Activated CD4-positive, alpha-beta T cell treated with anti-CD3 and anti-CD28 coated beads for 36 hours (primary cell): ENCODE measurements at regions of chr9 and their contacts with region 1.

Region 1: GRCh38 chr9:21443849-21444625 is 3.8 kb downstream of the IFNA1 start:
- DNase-seq: no peak
- ATAC-seq: peak; percentile 66
- H3K4me3 Mint-ChIP-seq: peak overlapping the region; percentile 31
- H3K27ac Mint-ChIP-seq: peak overlapping the region; percentile 1
- H3K4me1 Mint-ChIP-seq: peaks cover 12% of the 10 kb centered on the region
- H3K27me3 Mint-ChIP-seq: peaks cover 3% of the 10 kb centered on the region

Region 2: DNA sequence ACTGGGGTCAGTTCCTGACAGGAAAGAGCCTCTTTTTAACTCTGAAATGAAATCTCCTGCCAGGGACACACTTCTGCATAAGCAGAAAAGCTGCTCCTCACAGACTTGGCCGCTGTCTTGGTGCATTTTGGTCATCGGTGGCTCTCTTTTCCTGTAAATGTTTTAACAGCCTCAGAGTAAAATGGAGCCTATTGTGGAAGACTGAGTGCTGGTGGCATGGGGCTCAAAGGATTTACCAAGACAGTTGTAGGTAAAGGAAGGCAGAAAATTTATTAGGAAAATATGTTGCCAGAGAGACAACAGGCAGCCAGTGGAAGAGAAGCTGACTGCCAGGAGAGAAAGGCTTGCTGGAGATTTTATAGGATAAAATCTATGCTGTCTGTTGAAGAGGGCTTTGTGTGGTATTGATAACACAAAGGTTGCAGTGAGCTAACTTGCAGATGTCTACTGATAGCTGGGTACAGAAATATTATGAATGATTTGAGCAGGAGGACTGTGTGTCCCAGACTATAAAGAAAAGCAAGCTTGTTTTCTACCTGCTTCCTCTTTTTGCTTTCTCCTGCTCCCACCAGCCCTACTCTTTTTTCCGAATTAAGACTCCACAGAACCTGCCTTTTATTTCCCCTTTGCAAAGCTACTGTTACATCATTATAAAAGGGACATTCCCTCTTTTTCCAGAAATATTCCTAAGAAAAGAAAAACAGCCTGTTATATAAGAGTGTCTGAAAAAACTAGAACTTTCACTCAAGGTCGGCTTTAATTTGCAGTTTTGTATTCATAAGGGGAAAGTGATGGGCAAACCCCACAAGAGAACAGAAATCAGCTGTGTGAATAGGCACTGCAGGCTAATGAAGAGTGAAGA is 176.3 kb before region 1 on chr9:
- CTCF ChIA-PET with region 1: no interaction called
- POLR2A ChIA-PET with region 1: interaction called, 12 read pairs
- intact Hi-C with region 1: no loop called
- DNase-seq: no peak
- ATAC-seq: no peak
- H3K4me3 Mint-ChIP-seq: no peak overlapping the region
- H3K27ac Mint-ChIP-seq: no peak overlapping the region
- H3K4me1 Mint-ChIP-seq: no peaks in the 10 kb centered on the region
- H3K27me3 Mint-ChIP-seq: peaks cover 5% of the 10 kb centered on the region

Region 3: DNA sequence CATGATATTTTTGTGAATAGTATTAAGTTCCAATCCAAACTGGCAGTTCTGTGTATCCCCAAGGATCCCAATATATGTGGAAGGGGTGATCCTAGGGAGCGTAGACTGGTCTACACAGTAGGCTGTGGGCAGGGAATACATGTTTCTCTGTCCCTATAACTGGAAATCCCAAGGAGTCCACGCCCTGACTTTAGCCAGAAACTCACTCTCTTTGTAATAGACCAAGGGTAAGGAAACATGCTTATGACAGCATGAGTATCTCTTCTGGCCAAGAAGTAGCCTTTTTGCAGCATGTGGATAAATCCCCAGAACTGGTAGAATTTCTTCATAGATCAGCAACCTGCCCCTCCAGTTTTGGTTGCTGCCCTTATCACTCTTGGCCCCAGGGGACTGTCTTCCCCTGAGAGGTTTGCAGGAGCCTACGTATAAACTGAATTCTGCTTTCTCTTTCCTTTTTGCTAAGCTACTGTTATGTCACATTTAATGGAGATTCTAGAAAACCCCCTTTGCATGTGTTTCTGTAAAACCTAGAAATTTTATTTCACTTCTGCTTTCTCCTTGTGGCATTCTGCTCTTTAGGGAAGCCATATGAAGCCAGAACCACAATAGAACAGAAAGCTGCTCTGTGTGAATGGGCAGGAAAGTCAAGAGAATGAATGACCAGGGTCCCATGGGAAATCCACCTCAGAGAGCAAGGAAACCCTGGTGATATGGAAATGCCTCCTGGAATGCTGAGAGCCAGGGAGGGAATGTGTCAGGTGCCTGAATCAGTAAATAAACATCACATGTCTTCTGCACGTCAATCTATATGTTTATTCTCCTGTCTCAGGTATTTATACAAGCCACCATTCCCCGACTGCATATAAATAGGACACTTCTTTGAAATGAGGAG is 62.3 kb before region 1 on chr9:
- CTCF ChIA-PET with region 1: no interaction called
- POLR2A ChIA-PET with region 1: no interaction called
- intact Hi-C with region 1: no loop called
- DNase-seq: peak; percentile 18
- ATAC-seq: peak; percentile 90
- H3K4me3 Mint-ChIP-seq: no peak overlapping the region
- H3K27ac Mint-ChIP-seq: no peak overlapping the region
- H3K4me1 Mint-ChIP-seq: peaks cover 13% of the 10 kb centered on the region
- H3K27me3 Mint-ChIP-seq: peaks cover 37% of the 10 kb centered on the region